BJ (cell line): ENCODE measurements at regions of chr19 and their contacts with region 1.

Region 1: DNA sequence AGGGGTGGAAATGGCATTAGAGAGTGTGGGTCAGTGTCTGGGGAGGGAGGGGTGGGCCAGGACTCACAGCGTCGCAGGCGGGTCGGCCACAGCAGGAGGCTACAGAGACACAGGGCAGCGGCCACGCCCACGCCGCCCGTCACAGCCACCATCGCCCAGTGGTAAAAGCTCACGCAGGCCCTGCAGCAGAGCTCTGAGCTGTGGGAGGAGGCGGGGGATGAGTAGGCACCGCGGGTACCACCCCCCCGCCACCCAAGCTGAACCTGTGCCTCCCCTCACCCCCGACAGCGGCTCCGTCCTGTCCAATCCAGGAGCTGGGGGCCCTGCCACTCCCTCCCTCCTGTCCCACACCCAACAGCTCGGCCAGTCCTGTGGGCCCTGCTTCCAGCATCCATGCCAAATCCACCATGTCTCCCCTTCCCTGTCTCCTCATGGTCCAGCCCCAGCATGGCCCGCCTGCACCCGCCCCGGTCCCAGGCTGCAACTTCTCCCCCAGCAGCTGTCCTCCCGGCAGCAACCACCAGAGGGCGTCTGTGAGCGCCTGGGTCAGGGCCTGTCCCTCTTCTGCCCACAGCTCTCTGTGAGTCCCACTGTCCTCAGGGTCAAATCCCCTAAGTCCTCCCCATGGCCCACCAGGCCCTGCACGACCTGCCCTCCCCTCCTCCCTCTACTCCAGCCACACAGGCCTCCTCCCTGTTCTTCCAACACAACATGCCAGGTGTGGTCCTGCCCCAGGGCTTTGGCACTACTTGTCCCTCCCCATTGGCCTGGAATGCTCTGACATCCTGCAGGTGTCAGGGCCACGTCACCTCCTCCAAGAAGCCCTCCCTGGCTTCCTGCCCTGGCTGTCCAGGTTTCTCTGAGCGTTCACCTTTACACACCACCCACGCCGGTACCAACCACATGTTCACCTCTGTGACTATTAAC is 6.0 kb downstream of the TEKTIP1 start:
- DNase-seq: no peak
- H3K4me3 ChIP-seq: no peak overlapping the region
- H3K27me3 ChIP-seq: no peaks in the 10 kb centered on the region
- CTCF ChIP-seq: peak; percentile 98

Region 2: GRCh38 chr19:3557461-3558248 is 12.7 kb after region 1 on chr19 and contains the start of gene MFSD12:
- CTCF ChIA-PET with region 1: interaction called, 57 read pairs
- POLR2A ChIA-PET with region 1: no interaction called
- DNase-seq: peak; percentile 79
- H3K4me3 ChIP-seq: peak within 1 kb of the TSS; percentile 72
- H3K27me3 ChIP-seq: no peaks in the 10 kb centered on the region
- CTCF ChIP-seq: no peak
- polyA plus RNA-seq, gene MFSD12: 35.0 and 54.7 TPM in 2 replicates

Region 3: GRCh38 chr19:3618144-3618810 is 73.3 kb after region 1 on chr19:
- CTCF ChIA-PET with region 1: interaction called, 24 read pairs
- POLR2A ChIA-PET with region 1: no interaction called
- DNase-seq: no peak
- H3K4me3 ChIP-seq: no peak overlapping the region
- H3K27me3 ChIP-seq: no peaks in the 10 kb centered on the region
- CTCF ChIP-seq: peak; percentile 97

Region 4: GRCh38 chr19:3670796-3671679 is 126.0 kb after region 1 on chr19:
- CTCF ChIA-PET with region 1: no interaction called
- POLR2A ChIA-PET with region 1: no interaction called
- DNase-seq: peak; percentile 36
- H3K4me3 ChIP-seq: peak overlapping the region; percentile 33
- H3K27me3 ChIP-seq: no peaks in the 10 kb centered on the region
- CTCF ChIP-seq: no peak